ENCODE measurements at regions of chr5 and their contacts with region 1.

Region 1: GRCh38 chr5:96855031-96855872 is 21.0 kb upstream of the ERAP2 start:
- DNase-seq: no peak
- H3K4me3 ChIP-seq: no peak overlapping the region
- CTCF ChIP-seq: no peak

Region 2: DNA sequence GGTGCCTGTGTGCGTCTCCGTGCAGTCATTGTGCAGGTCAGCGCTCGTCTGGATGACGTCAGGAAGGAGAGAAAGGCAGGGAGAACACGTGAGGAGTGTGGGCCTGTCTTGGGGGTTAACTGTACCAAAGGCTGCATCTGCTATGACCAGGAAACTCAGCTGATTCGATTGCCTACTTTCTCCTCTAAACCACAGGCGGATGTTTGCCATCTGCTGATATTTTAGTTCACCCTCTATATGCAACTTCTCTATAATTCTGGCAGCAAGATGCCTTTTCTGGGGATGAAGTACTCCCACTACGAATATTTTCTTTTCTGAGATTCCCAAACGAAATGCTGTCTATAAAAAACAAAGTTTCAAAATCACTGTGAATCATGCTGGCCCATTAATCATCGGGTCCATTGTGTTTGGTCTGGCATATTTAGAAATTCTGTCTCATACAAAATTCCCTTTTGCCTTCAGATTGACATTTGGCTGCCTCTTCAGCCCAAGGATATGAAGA is 446.9 kb before region 1 on chr5:
- CTCF ChIA-PET with region 1: no interaction called
- POLR2A ChIA-PET with region 1: no interaction called
- DNase-seq: no peak
- H3K4me3 ChIP-seq: no peak overlapping the region
- CTCF ChIP-seq: no peak

Region 3: GRCh38 chr5:96844476-96844990 is 10.7 kb before region 1 on chr5:
- CTCF ChIA-PET with region 1: interaction called, 10 read pairs
- POLR2A ChIA-PET with region 1: no interaction called
- DNase-seq: no peak
- H3K4me3 ChIP-seq: no peak overlapping the region
- CTCF ChIP-seq: no peak

Measured in AG04449 (cell line).